Naive thymus-derived CD4-positive, alpha-beta T cell (primary cell): ENCODE measurements at regions of chr11 and their contacts with region 1.

Region 1: DNA sequence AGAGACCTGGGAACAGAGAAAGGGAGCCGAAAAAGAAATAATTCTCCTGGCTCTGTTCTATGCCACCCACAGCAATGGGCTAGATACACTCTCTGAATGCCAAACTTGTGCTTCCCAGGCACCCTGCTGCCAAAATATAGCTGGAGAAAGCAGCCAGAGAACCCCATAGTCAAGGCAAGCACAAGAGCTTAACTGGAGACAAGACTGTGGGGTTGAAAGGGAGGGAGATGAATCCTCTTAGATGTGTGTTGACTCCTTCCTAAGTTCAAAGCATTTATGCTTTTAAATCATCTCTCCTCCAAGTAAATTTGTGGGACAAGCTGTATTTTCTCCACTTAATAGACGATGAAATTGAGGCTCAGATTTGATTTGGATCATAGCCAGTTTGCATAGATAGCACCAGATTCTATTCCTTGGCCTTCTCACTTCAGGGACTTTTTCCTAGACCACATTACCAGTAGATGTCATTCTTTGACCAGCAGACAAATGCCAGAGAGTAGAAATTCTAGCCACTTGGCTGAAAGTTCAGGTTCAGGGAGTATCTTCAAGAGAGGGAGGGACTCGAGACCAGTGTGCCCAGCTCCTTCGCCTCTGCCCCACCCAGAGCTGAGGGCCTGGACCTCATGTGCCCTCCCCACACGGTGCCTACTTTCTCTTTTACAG is 16.5 kb upstream of the ETS1 start:
- DNase-seq: no peak
- ATAC-seq: no peak
- H3K4me3 ChIP-seq: no peak overlapping the region
- H3K4me3 Mint-ChIP-seq: no peak overlapping the region
- H3K27ac ChIP-seq: no peak overlapping the region
- H3K27ac Mint-ChIP-seq: peak overlapping the region in 3 of 9 donors; percentile 28 to 77 (median 32)
- H3K4me1 ChIP-seq: peaks cover 0 to 34% of the 10 kb centered on the region in 2 donors
- H3K4me1 Mint-ChIP-seq: peaks cover 10 to 86% (median 70%) of the 10 kb centered on the region in 7 donors
- H3K27me3 ChIP-seq: no peaks in the 10 kb centered on the region
- H3K27me3 Mint-ChIP-seq: no peaks in the 10 kb centered on the region

Region 2: DNA sequence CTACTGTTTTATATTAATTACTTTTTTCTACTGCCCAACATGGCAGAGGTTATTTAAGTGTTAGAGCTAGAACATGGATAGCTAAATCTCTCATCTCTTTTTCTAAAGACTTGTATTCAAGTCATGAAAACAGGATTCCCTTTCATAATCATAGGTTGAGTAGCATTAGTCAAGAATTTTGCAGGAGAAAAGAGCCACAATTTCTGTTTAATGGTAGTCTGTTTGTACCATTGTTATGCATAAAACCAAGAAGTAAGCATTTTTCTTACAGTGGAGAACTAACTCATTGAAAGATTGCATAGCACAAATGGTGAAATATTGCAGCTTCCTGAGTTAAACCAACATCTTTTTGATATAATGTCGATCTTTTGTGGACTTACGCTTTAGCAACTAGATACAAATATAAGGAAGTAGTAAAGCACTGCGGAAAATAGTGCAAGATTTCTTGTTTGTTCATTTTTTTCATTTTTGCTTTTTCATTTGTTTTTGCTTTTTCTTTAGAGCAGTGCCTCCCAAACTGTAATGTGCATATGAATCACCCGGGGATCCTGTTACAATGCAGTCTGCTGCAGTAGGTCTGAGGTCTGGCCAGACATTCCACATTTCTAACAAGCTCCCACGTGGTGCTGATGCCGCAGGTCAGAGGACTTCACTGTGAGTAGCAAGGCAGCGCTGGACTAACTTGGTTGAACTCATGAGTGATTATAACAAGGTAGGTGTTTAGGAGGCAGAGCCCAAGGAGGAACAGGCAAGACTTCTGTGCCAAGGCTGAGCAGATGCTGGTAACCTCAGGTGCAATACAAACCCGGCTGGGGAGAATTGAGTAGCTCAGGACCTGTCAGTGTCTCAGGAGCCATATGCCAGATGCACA is 21.2 kb before region 1 on chr11:
- CTCF ChIA-PET with region 1: no interaction called
- POLR2A ChIA-PET with region 1: interaction called, 5 read pairs
- intact Hi-C with region 1: loop called in 1 of 2 experiments (anchors 2 kb)
- DNase-seq: no peak
- ATAC-seq: peak; percentile 61
- H3K4me3 ChIP-seq: no peak overlapping the region
- H3K4me3 Mint-ChIP-seq: peak overlapping the region; percentile 15 to 78 (median 70)
- H3K27ac ChIP-seq: no peak overlapping the region
- H3K27ac Mint-ChIP-seq: peak overlapping the region in 7 of 9 donors; percentile 38 to 93 (median 63)
- H3K4me1 ChIP-seq: peaks cover 0 to 6% of the 10 kb centered on the region in 2 donors
- H3K4me1 Mint-ChIP-seq: peaks cover 40 to 67% (median 56%) of the 10 kb centered on the region in 7 donors
- H3K27me3 ChIP-seq: no peaks in the 10 kb centered on the region
- H3K27me3 Mint-ChIP-seq: peaks cover 0 to 21% (median 0%) of the 10 kb centered on the region in 5 donors

Region 3: GRCh38 chr11:128814856-128815705 is 211.2 kb after region 1 on chr11:
- CTCF ChIA-PET with region 1: no interaction called
- POLR2A ChIA-PET with region 1: no interaction called
- intact Hi-C with region 1: no loop called
- DNase-seq: no peak
- ATAC-seq: no peak
- H3K4me3 ChIP-seq: no peak overlapping the region
- H3K4me3 Mint-ChIP-seq: no peak overlapping the region
- H3K27ac ChIP-seq: no peak overlapping the region
- H3K27ac Mint-ChIP-seq: peak overlapping the region in 2 of 9 donors; percentile 38 to 68
- H3K4me1 ChIP-seq: no peaks in the 10 kb centered on the region
- H3K4me1 Mint-ChIP-seq: peaks cover 0 to 7% (median 4%) of the 10 kb centered on the region in 7 donors
- H3K27me3 ChIP-seq: no peaks in the 10 kb centered on the region
- H3K27me3 Mint-ChIP-seq: no peaks in the 10 kb centered on the region